Mammary epithelial cell (primary cell): ENCODE measurements at regions of chr3 and their contacts with region 1.

Region 1: DNA sequence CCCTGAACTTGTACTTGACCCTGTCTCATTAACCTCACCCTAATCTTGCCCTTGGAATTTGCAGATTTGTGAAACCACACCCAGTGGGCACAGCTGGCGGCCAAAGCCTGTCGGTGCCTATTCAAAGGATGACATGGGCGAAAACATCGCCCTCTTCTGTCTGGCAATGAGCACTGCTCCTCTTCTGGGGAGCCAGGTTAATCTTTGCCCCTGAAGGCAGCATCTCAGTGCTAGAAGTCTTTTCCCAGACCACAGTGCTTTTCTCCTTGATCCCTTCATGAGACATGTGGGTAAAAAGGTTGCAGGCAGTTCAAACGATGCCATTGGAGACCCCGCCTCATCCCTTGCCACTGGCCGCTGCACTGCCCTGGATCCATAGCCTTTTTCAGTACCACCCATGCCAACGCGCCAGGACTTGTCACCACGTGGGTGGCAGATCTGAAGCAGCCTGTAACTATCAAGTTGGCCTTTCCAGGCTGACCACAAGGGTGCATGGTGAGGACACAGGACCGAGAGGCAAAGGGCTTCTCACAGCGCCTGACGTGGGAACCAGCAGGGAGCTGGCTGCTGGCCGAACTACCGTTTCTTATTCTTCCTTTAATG is 6.5 kb upstream of the DNASE1L3 start:
- DNase-seq: peak; percentile 95
- H3K4me3 ChIP-seq: peak overlapping the region in 2 of 3 experiments; percentile 4 to 25
- H3K27ac ChIP-seq: peak overlapping the region; percentile 77
- H3K4me1 ChIP-seq: peaks cover 51% of the 10 kb centered on the region
- H3K27me3 ChIP-seq: no peaks in the 10 kb centered on the region
- CTCF ChIP-seq: peak; percentile 89 to 95

Region 2: GRCh38 chr3:57956119-57956832 is 261.0 kb before region 1 on chr3:
- CTCF ChIA-PET with region 1: no interaction called
- dilution Hi-C with region 1: no loop called
- in situ Hi-C with region 1: no loop called
- intact Hi-C with region 1: loop called (anchors 1 kb)
- DNase-seq: peak; percentile 95
- H3K4me3 ChIP-seq: no peak overlapping the region
- H3K27ac ChIP-seq: peak overlapping the region; percentile 53
- H3K4me1 ChIP-seq: peaks cover 38% of the 10 kb centered on the region
- H3K27me3 ChIP-seq: no peaks in the 10 kb centered on the region
- CTCF ChIP-seq: no peak

Region 3: DNA sequence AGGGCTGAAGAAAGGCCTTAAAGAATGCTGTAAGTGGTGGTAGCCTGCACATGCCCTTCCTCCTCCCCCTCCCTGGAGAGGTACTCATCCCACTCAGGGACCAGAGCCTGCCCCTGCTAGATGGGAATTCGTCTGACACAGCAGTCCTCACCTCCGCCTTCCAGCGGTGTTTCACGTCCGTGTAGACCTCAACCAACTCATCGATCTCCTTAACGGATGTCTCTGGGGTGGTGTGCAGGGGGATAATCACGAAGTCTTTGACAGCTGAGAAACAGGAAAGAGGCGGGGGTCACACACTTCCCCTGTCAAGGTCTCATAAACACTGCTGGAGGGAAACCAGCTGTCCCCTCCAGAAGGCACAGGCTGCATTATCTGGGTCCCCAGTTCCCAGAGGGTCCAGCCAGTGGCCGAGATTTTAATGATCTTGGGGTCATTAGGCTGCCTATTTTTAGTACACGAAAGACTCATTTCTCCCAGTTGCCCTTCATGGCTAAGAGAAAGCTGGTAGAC is 16.4 kb before region 1 on chr3:
- CTCF ChIA-PET with region 1: interaction called, 18 read pairs
- dilution Hi-C with region 1: no loop called
- in situ Hi-C with region 1: no loop called
- intact Hi-C with region 1: no loop called
- DNase-seq: no peak
- H3K4me3 ChIP-seq: no peak overlapping the region
- H3K27ac ChIP-seq: no peak overlapping the region
- H3K4me1 ChIP-seq: no peaks in the 10 kb centered on the region
- H3K27me3 ChIP-seq: no peaks in the 10 kb centered on the region
- CTCF ChIP-seq: no peak

Region 4: DNA sequence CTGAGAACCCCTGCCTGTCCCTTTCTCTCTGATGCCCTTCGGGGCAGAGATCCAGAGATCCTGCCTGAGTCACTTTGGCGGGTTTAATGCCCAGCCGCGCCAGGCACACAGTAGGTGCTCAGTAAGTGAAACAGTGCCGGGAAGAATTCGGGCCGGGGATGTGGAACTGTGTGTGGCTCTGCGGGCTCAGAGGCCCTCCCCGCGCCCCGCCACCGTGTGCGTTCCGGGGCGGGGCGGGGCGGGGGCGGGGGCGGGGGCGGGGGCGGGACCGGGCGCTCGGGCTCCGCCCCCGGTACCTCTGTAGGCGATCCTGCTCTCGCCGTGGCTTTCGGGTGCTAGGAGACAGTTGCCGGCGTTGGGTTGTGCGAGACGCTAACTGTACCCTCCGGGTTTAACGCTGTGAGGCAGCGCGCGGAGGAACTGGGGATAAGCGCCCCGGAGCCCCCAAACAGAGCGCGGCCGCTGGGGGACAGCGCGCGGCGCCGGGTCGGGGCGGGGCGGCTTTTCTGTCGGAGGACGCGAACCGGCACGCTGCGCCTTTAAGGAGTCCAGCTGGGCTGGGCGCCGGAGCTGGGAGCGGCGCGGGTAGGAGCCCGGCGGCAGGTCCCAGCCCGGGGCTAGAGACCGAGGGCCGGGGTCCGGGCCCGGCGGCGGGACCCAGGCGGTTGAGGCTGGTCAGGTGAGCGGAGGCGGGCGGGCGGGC is 20.1 kb after region 1 on chr3 and contains the start of gene ABHD6:
- CTCF ChIA-PET with region 1: no interaction called
- dilution Hi-C with region 1: no loop called
- in situ Hi-C with region 1: no loop called
- intact Hi-C with region 1: loop called (anchors 1 kb)
- DNase-seq: peak; percentile 73
- H3K4me3 ChIP-seq: peak within 1 kb of the TSS; percentile 82 to 87 (median 86)
- H3K27ac ChIP-seq: peak within 1 kb of the TSS; percentile 45
- H3K4me1 ChIP-seq: peaks cover 25% of the 10 kb centered on the region
- H3K27me3 ChIP-seq: no peaks in the 10 kb centered on the region
- CTCF ChIP-seq: peak in 1 of 2 donors; percentile 43
- total RNA-seq, gene ABHD6: 9.4 to 21.3 TPM

Region 5: GRCh38 chr3:58266577-58266976 is 49.3 kb after region 1 on chr3:
- CTCF ChIA-PET with region 1: no interaction called
- dilution Hi-C with region 1: no loop called
- in situ Hi-C with region 1: no loop called
- intact Hi-C with region 1: no loop called
- DNase-seq: no peak
- H3K4me3 ChIP-seq: no peak overlapping the region
- H3K27ac ChIP-seq: no peak overlapping the region
- H3K4me1 ChIP-seq: peaks cover 9% of the 10 kb centered on the region
- H3K27me3 ChIP-seq: no peaks in the 10 kb centered on the region
- CTCF ChIP-seq: no peak

Region 6: DNA sequence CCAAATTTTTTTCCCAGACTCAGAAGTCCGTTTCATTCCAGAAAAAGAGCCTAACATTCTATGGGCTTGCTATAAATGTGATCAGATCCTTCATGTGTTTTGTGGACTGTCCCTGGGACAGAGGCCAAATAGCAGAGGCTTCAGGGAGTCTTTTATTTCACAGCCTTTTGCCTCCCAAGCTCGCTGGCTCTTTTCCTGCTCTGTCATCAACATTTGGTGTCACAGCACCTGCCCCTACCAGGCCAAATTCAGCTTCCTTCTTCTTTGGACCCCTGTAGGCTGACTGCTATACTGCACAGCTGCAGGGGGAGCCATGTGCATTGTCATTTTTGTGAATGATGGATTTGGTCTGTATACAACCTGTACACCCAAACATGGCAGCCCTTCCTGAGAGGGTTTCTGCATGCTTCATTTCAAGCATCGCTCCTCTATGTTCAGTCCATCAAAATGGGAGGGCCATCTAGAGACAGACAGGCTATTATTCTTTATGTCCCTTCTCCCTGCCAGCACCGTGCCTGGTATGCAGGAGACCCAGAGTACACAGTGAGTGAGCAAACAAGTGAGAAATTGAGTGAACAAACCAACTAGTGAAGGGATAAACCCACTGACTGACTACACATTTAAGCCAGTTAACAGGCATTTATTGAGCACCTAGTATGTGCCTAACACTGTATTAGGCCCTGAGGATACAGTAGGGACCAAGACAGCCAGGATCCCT is 70.9 kb after region 1 on chr3:
- CTCF ChIA-PET with region 1: no interaction called
- dilution Hi-C with region 1: loop called (anchors 5 kb)
- in situ Hi-C with region 1: no loop called
- intact Hi-C with region 1: no loop called
- DNase-seq: no peak
- H3K4me3 ChIP-seq: no peak overlapping the region
- H3K27ac ChIP-seq: no peak overlapping the region
- H3K4me1 ChIP-seq: no peaks in the 10 kb centered on the region
- H3K27me3 ChIP-seq: no peaks in the 10 kb centered on the region
- CTCF ChIP-seq: no peak

Region 7: GRCh38 chr3:58299839-58300516 is 82.7 kb after region 1 on chr3:
- CTCF ChIA-PET with region 1: no interaction called
- dilution Hi-C with region 1: no loop called
- in situ Hi-C with region 1: loop called in 1 of 2 experiments (anchors 5 kb)
- intact Hi-C with region 1: loop called (anchors 1 kb)
- DNase-seq: peak; percentile 14
- H3K4me3 ChIP-seq: no peak overlapping the region
- H3K27ac ChIP-seq: no peak overlapping the region
- H3K4me1 ChIP-seq: no peaks in the 10 kb centered on the region
- H3K27me3 ChIP-seq: no peaks in the 10 kb centered on the region
- CTCF ChIP-seq: peak; percentile 52 to 63

Region 8: DNA sequence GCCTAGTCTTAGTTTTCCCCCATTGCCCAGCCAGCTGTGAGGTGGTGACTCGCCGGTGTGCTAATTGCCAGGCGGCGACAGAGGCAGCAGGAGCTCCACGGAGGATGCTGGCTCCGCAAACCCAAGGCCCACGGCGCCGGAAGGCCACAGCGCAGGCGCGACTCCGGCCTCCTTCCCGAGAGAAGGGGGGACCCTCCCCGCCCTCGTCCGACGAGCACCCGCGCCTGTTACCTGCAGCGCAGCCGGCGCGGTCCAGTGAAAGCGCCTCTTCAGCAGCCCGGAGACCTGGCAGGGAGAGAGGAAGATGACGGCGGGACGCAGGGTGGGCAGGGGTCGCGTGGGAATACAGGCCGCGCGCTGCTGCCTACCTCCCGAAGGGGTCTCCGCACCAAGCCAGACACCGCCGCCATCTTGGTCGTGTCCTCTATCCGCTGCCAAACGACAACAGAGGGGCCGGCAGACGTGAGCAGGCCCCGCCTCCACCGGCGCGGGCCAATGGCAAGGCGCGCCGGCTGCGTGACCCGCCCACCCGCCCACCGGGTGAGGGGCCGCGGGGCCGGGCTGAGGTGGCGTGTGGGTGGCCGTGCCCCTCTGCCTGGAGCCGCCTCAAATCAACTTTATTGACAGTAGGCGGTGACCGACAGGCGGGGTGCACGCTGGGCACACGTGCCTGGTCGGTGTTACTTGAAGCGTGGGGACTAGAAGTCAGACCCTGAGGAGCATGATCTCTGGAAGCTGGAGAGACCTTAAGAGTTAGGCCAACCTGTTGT is 216.3 kb after region 1 on chr3 and contains the start of gene PDHB:
- CTCF ChIA-PET with region 1: no interaction called
- dilution Hi-C with region 1: no loop called
- in situ Hi-C with region 1: no loop called
- intact Hi-C with region 1: loop called (anchors 10 kb)
- DNase-seq: peak; percentile 86
- H3K4me3 ChIP-seq: peak within 1 kb of the TSS; percentile 84 to 96 (median 92)
- H3K27ac ChIP-seq: peak within 1 kb of the TSS; percentile 55
- H3K4me1 ChIP-seq: peaks cover 21% of the 10 kb centered on the region
- H3K27me3 ChIP-seq: no peaks in the 10 kb centered on the region
- CTCF ChIP-seq: no peak
- total RNA-seq, gene PDHB: 43.2 to 44.9 TPM

Region 9: GRCh38 chr3:58737644-58738043 is 520.3 kb after region 1 on chr3:
- CTCF ChIA-PET with region 1: no interaction called
- dilution Hi-C with region 1: no loop called
- in situ Hi-C with region 1: no loop called
- intact Hi-C with region 1: no loop called
- DNase-seq: no peak
- H3K4me3 ChIP-seq: no peak overlapping the region
- H3K27ac ChIP-seq: no peak overlapping the region
- H3K4me1 ChIP-seq: no peaks in the 10 kb centered on the region
- H3K27me3 ChIP-seq: no peaks in the 10 kb centered on the region
- CTCF ChIP-seq: no peak